Activated T-helper 1 cell treated with anti-CD3 and anti-CD28 coated beads, Interleukin-12 subunit alpha, Interleukin-12 subunit beta, Interleukin-2, Interleukin-4 antibody, amounts not matched to agents 30 ng/mL and 10 ng/mL and 1 ng/mL, durations not matched to agents 14 hours and 24 hours and 36 hours (primary cell): ENCODE measurements at regions of chr3 and their contacts with region 1.

Region 1: GRCh38 chr3:122415720-122416654 is at the start of gene WDR5B:
- DNase-seq: peak; percentile 96
- H3K4me3 Mint-ChIP-seq: peak within 1 kb of the TSS; percentile 98
- H3K27ac Mint-ChIP-seq: peak within 1 kb of the TSS; percentile 99
- H3K4me1 Mint-ChIP-seq: peaks cover 48% of the 10 kb centered on the region
- H3K27me3 Mint-ChIP-seq: no peaks in the 10 kb centered on the region
- total RNA-seq, gene WDR5B: 4.3 and 5.6 TPM in 2 replicates

Region 2: DNA sequence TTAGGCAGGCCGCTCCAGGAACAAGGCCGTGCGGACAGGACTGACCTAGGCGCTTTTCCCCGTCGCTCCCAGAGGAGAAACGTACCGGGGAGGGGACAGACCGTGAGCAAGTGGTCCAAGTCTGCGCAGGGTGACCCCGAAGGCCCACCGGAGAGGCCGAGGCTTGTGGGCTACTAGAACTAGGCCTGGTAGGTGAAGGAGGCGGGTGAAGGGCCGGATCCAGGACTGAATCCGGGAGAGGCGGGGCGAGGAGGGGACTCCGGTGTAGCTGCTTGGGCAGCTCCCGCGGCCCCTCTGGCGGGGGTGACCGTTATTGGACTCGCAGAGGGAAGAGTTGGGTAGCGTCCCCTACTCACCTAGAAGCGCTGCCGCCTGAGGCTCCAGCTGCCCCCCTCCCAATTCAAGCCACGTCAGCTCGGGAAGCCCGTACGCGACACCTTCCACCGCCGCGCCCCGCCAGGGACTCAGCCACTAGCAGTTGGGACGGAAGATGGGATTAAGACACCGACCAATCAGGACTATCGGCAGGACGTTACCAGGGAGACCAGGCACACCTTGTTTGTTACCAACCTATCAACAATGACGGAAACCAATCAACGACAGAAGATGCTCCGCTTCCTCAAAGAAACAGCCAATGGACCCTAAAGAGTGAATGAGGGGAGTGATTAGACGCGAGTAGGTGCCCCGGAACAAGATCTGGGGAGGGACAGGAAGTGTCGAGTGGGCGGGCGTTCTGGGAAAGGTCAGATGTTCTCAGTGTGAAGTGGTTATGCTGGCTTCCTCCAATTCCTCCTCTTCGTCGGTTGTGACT is 666.5 kb before region 1 on chr3 and contains the start of gene GOLGB1:
- intact Hi-C with region 1: loop called (anchors 1 kb)
- DNase-seq: peak; percentile 89
- H3K4me3 Mint-ChIP-seq: no peak within 1 kb of the TSS
- H3K27ac Mint-ChIP-seq: no peak within 1 kb of the TSS
- H3K4me1 Mint-ChIP-seq: peaks cover 5% of the 10 kb centered on the region
- H3K27me3 Mint-ChIP-seq: peaks cover 12% of the 10 kb centered on the region
- total RNA-seq, gene GOLGB1: 23.2 and 23.6 TPM in 2 replicates

Region 3: DNA sequence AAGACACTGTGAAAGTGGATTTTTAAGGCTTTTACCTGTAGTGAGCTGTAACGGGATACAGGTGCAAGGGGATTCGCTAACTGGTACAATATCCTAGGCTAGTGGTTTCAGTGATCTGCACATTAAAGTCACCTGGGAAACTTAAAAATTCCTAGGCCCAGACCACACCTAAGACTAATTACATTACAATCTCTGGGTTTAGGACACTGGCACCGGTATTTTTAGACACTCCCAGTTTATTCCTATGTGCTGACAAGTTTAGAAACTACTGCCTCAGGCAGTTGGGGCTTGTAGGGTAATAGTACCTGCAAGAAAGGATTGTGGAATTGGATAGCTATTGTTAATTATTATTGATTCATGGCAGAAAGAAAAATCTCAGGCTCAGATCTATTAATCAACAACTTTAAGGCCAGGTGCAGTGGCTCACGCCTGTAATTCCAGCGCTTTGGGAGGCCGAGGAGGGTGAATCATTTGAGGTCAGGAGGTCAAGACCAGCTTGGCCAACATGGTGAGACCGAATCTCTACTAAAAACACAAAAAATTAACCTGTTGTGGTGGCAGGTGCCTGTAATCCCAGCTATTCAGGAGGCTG is 282.9 kb before region 1 on chr3:
- intact Hi-C with region 1: no loop called
- DNase-seq: no peak
- H3K4me3 Mint-ChIP-seq: no peak overlapping the region
- H3K27ac Mint-ChIP-seq: no peak overlapping the region
- H3K4me1 Mint-ChIP-seq: no peaks in the 10 kb centered on the region
- H3K27me3 Mint-ChIP-seq: peaks cover 11% of the 10 kb centered on the region

Region 4: GRCh38 chr3:122383771-122384697 is 32.0 kb before region 1 on chr3 and contains the start of gene FAM162A:
- intact Hi-C with region 1: loop called (anchors 1 kb)
- DNase-seq: peak; percentile 93
- H3K4me3 Mint-ChIP-seq: peak within 1 kb of the TSS; percentile 96
- H3K27ac Mint-ChIP-seq: peak within 1 kb of the TSS; percentile 90
- H3K4me1 Mint-ChIP-seq: peaks cover 81% of the 10 kb centered on the region
- H3K27me3 Mint-ChIP-seq: no peaks in the 10 kb centered on the region
- total RNA-seq, gene FAM162A: 63.7 and 70.0 TPM in 2 replicates

Region 5: DNA sequence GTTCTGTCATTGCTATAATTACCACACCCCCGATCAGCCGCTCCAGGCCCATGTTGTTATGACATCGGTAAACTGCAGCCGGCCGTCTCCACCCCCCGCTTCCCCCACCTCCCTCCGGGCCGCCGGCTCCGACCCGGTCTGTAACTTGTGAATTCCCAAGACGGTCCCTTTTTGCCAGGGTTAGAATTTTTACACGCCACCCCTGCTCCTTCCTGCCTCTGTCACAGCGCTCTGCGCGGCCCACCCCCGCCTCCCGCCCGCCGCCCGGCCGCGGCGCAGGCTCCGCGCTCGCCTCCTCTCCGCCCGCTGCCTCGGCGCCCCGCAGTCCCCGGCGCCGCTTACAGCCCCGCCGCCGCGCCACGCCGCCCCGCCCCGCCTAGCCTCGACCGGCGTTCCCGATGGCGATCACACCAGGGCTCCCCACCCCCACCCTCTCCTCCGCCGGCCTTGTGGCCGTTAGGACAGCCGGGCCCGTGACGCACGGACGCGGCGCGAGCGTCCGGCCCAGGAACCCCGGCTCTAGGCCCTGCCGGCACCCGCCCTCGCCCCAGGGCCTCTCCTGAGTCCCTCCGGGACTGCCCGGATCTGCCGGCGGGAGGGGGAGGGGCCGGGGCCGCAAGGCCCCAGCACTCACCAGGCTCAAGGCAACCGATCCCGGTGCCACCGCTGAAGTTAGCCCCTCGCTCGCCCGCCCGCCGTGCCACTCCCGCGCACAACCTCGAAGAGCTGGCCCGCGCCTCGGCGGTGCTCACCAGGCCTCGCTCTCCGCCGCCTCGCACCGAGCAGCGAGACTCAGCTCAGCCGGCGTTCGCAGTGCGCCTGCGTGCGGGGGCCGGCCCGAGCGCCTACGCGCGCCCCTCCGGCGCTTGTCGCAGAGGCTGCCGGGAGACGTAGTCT is 98.4 kb after region 1 on chr3 and contains the start of gene KPNA1:
- intact Hi-C with region 1: loop called (anchors 1 kb)
- DNase-seq: peak; percentile 85
- H3K4me3 Mint-ChIP-seq: peak within 1 kb of the TSS; percentile 90
- H3K27ac Mint-ChIP-seq: peak within 1 kb of the TSS; percentile 92
- H3K4me1 Mint-ChIP-seq: peaks cover 46% of the 10 kb centered on the region
- H3K27me3 Mint-ChIP-seq: peaks cover 4% of the 10 kb centered on the region
- total RNA-seq, gene KPNA1: 81.7 and 88.2 TPM in 2 replicates

Region 6: DNA sequence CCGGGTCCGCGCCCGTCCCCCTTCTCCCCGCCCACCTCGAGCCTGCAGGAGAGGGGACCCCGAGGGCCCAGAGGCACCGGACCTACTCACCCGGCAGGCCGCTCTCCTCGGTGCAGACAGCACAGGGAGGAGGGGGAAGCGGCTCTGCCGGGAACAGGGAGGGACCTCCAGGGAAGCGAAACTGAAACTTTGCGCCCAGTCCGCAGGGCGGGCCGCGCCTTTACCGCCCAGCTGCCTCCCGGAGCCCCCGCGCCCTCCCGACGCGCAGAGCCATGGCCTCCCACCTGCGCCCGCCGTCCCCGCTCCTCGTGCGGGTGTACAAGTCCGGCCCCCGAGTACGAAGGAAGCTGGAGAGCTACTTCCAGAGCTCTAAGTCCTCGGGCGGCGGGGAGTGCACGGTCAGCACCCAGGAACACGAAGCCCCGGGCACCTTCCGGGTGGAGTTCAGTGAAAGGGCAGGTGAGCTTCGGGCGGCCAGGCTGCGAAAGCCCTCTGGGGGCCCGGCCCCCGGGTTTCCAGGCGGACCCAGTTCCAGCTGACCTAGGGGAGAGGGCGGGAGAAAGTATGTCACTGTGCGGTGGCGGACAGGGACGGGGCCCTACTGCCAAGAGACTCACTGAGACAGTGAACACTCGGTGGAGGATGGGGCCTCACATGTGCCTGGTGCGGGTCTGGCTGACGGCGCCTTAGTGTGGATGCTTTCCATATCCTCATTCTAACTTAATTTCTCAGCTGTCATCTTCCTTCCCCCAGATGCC is 148.3 kb after region 1 on chr3 and contains the starts of genes DTX3L and PARP9:
- intact Hi-C with region 1: loop called (anchors 2 kb)
- DNase-seq: peak; percentile 87
- H3K4me3 Mint-ChIP-seq: peak within 1 kb of the TSS; percentile 99
- H3K27ac Mint-ChIP-seq: peak within 1 kb of the TSS; percentile 98
- H3K4me1 Mint-ChIP-seq: peaks cover 79% of the 10 kb centered on the region
- H3K27me3 Mint-ChIP-seq: no peaks in the 10 kb centered on the region
- total RNA-seq, gene DTX3L: 40.8 and 44.5 TPM in 2 replicates
- total RNA-seq, gene PARP9: 45.0 and 47.3 TPM in 2 replicates

Region 7: DNA sequence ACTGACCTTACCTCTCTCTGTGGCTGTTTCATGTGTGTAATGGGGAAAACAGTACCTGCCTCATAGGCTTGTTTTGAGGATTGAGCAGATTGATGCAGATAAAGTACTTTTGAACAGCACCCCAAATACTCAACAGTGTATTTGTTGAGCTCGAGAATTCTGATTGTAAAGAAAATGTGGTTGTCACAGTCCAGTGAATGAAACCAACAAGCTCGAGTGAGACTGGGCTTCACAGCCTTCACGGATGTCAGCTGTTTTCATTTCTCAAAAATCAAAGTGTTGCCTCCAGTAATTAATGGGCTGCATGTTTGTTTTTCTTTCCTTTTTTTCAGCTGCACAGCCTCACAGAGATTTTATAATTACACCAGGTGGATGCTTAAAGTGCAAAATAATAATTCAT is 205.1 kb after region 1 on chr3:
- intact Hi-C with region 1: no loop called
- DNase-seq: no peak
- H3K4me3 Mint-ChIP-seq: no peak overlapping the region
- H3K27ac Mint-ChIP-seq: no peak overlapping the region
- H3K4me1 Mint-ChIP-seq: no peaks in the 10 kb centered on the region
- H3K27me3 Mint-ChIP-seq: no peaks in the 10 kb centered on the region